Activated naive CD4-positive, alpha-beta T cell treated with anti-CD3 and anti-CD28 coated beads for 36 hours (primary cell): ENCODE measurements at regions of chr10 and their contacts with region 1.

Region 1: GRCh38 chr10:42753126-42753506 is 29.5 kb upstream of the BMS1 start:
- DNase-seq: peak; percentile 80
- H3K4me3 Mint-ChIP-seq: peak overlapping the region; percentile 67
- H3K27ac Mint-ChIP-seq: no peak overlapping the region
- H3K4me1 Mint-ChIP-seq: peaks cover 7% of the 10 kb centered on the region
- H3K27me3 Mint-ChIP-seq: peaks cover 55% of the 10 kb centered on the region

Region 2: DNA sequence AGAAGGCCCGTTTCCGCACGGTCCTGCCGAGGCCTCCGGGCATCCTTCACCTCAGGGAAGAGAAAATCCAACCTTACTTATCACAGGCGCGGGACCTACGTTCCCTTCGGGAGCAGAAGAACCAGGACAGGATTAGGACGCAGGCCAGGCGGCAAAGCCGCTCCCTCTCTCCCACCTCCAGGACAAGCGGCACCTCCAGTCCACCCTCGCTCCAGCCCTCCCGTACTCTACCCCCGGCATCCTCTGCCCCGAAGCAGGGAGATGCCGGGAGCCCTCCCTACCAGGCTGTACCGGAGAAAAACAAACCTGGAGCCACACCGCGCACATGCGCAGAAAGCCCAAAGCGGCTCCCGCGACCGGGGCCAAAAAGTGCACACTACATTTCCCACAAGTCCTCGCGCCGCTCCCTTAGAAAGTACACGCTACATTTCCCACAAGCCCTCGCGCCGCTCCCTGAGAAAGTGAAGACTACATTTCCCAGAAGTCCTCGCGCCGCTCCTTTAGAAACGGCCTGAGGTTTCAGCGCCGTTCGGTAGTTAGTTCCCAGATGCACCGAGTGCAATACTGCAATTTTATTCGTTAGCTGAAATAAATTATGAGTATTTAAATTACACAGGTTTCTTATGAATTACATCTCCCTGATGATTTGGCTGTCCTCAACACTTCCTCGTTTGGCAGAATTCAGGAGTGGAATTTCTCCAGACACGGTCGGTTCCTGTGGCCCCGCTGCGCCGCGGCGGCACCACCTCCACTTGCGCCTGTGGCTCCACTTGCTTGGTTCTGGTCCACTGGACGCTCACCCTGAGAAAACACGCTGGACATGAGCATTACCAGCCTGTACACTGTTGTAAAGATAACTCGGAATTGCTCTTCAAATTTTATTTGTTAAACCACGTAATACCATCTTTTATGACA is 200.4 kb before region 1 on chr10:
- CTCF ChIA-PET with region 1: no interaction called
- intact Hi-C with region 1: loop called (anchors 2 kb)
- DNase-seq: peak; percentile 97
- H3K4me3 Mint-ChIP-seq: peak overlapping the region; percentile 87
- H3K27ac Mint-ChIP-seq: peak overlapping the region; percentile 92
- H3K4me1 Mint-ChIP-seq: peaks cover 33% of the 10 kb centered on the region
- H3K27me3 Mint-ChIP-seq: no peaks in the 10 kb centered on the region

Region 3: DNA sequence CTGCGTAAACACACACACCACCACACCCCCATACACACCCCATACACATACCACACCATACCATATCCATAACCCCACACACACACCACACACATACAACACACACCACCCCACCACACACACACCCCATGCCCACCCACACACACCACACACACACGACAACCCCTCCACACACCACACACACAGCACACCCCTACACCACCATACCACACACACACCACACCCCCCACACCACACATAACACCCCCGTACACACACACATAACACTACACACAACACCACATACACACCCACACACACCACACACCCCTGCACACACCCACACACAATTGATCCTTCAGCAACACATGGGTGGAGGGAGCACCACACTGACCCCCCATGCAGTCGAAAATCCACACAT is 20.9 kb before region 1 on chr10:
- CTCF ChIA-PET with region 1: no interaction called
- intact Hi-C with region 1: no loop called
- DNase-seq: no peak
- H3K4me3 Mint-ChIP-seq: no peak overlapping the region
- H3K27ac Mint-ChIP-seq: no peak overlapping the region
- H3K4me1 Mint-ChIP-seq: no peaks in the 10 kb centered on the region
- H3K27me3 Mint-ChIP-seq: peaks cover 18% of the 10 kb centered on the region

Region 4: DNA sequence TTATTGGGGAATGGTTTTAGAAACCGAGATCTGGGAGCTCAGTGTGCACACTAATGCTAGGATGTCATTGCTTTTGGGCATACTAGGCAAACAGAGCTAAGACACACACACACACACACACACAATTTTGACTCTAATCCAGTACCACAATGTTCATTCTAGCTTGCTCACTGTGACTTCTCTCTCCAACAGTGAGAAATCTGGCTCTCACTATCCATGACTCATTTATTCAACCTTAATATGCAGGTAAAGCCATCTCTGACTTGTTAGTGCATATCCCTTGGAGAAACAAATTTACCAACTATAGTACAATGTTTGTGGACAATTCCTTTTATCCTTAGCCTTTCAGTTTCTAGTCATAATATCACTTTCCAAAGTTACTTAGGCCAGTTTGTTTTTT is 23.6 kb after region 1 on chr10:
- CTCF ChIA-PET with region 1: interaction called, 5 read pairs
- intact Hi-C with region 1: loop called (anchors 2 kb)
- DNase-seq: no peak
- H3K4me3 Mint-ChIP-seq: no peak overlapping the region
- H3K27ac Mint-ChIP-seq: no peak overlapping the region
- H3K4me1 Mint-ChIP-seq: peaks cover 11% of the 10 kb centered on the region
- H3K27me3 Mint-ChIP-seq: peaks cover 25% of the 10 kb centered on the region

Region 5: DNA sequence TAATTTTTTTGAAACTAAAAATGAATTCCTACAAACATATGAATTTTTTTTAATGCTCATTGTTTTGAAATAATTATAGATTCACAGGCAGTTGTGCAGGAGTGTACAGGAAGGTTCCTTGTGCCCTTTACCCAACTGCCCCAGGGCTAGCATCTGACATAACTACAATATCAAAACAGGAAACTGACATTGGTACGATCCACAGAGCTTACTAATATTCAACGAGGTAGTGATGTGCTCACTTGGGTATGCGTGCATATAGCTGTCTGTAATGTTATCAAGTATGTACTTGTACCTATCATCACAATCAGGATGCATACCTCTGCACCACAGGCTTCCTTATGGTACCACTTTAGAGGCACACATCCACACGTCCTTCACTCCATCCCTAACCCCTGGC is 97.8 kb after region 1 on chr10:
- CTCF ChIA-PET with region 1: no interaction called
- intact Hi-C with region 1: no loop called
- DNase-seq: no peak
- H3K4me3 Mint-ChIP-seq: no peak overlapping the region
- H3K27ac Mint-ChIP-seq: no peak overlapping the region
- H3K4me1 Mint-ChIP-seq: no peaks in the 10 kb centered on the region
- H3K27me3 Mint-ChIP-seq: peaks cover 21% of the 10 kb centered on the region

Region 6: DNA sequence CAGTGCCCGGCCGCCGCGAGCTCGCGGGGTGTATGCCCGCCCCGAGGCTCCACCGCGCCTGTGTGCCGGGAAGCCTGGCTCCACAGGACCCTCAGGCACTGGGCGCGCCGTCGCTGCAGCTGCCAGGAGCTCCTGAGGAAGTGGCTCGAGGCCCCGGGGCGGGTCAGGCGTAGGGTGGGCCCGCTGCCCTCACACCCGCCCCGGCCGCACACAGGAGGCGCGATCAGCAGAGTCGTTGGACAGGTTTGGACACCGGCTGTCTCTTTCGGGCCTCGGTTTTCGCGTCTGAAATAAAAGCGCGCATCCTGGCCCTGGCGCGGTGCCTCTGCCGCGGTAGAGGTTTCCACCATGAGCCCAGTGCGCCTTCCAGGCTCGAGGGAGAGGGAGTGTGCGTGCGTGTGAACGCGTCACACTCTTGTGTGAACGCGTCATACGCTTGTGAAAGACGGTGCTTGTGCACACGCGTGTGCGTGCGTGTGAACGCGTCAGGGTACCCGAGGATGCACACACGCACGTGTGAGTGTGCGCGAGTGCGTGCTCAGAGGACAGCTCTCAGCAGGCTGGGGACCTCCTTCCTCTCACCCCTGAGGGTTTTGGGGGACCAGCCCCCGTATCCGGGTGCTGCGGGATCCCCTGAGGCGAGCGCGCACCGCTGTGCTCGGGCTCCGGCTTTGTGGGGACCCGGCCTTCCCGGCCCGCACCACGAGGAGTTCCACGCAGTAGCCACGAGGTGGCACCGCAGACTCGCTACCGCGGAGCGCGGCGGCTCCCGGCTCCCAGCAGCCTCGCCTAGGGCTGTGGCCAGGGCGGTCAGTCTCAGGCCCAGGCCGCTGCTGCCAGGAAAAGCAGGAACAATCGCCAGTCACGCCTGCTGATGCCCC is 113.2 kb after region 1 on chr10:
- CTCF ChIA-PET with region 1: no interaction called
- intact Hi-C with region 1: loop called (anchors 5 kb)
- DNase-seq: peak; percentile 65
- H3K4me3 Mint-ChIP-seq: peak overlapping the region; percentile 23
- H3K27ac Mint-ChIP-seq: no peak overlapping the region
- H3K4me1 Mint-ChIP-seq: no peaks in the 10 kb centered on the region
- H3K27me3 Mint-ChIP-seq: peaks cover 27% of the 10 kb centered on the region

Region 7: DNA sequence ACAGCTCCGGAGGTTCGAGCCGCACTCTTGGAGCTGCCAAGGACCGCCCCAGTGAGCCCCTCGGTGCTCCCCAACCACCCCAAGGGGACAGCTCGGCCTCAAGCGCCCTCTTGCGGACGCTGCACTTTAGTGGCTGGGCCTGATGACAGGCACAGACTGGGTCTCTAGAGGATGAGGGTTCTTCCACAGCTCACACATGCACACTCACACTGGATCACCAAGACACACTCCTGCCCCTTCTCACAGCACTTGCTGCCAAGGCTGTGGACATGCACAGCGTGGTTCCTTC is 325.8 kb after region 1 on chr10:
- CTCF ChIA-PET with region 1: interaction called, 4 read pairs
- intact Hi-C with region 1: loop called (anchors 5 kb)
- DNase-seq: peak; percentile 49
- H3K4me3 Mint-ChIP-seq: no peak overlapping the region
- H3K27ac Mint-ChIP-seq: no peak overlapping the region
- H3K4me1 Mint-ChIP-seq: peaks cover 3% of the 10 kb centered on the region
- H3K27me3 Mint-ChIP-seq: peaks cover 32% of the 10 kb centered on the region

Region 8: DNA sequence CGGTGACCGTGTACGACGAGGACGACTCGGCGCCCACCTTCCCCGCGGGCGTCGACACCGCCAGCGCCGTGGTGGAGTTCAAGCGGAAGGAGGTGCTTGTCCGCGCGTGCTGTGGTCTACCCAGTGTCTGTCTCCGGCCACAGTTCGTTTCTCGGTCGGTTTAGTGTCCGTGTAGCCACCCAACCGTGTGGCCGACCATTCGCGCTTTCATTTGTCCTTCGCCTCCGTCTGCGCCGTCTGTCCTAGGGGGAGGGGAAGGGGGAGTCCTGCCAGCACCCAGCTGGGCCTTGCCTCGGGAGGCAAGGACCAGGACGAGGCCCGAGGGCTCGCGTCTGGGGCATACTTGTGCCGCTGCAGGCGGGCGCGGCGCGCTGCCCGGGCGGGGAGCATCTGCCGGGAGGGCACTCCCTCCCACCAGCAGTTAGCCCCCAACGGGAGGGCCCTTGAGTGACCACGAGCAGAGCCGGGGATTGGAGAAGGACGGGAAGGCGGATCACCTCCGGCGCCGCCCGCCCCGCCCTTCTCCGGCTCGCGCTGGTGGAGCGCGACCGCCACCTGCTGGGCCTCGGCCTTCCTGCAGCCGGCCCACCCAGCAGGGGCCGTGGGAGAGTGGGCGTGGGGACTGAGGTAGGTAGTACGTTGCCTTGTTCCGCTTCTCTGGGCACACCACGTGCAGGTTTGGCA is 352.1 kb after region 1 on chr10:
- CTCF ChIA-PET with region 1: interaction called, 4 read pairs
- intact Hi-C with region 1: loop called (anchors 1 kb)
- DNase-seq: peak; percentile 74
- H3K4me3 Mint-ChIP-seq: peak overlapping the region; percentile 63
- H3K27ac Mint-ChIP-seq: no peak overlapping the region
- H3K4me1 Mint-ChIP-seq: peaks cover 4% of the 10 kb centered on the region
- H3K27me3 Mint-ChIP-seq: peaks cover 13% of the 10 kb centered on the region

Region 9: GRCh38 chr10:43461950-43462349 is 708.8 kb after region 1 on chr10:
- CTCF ChIA-PET with region 1: interaction called, 3 read pairs
- intact Hi-C with region 1: loop called (anchors 5 kb)
- DNase-seq: peak; percentile 24
- H3K4me3 Mint-ChIP-seq: no peak overlapping the region
- H3K27ac Mint-ChIP-seq: no peak overlapping the region
- H3K4me1 Mint-ChIP-seq: peaks cover 12% of the 10 kb centered on the region
- H3K27me3 Mint-ChIP-seq: no peaks in the 10 kb centered on the region